ENCODE measurements at regions of chr5 and their contacts with region 1.

Region 1: DNA sequence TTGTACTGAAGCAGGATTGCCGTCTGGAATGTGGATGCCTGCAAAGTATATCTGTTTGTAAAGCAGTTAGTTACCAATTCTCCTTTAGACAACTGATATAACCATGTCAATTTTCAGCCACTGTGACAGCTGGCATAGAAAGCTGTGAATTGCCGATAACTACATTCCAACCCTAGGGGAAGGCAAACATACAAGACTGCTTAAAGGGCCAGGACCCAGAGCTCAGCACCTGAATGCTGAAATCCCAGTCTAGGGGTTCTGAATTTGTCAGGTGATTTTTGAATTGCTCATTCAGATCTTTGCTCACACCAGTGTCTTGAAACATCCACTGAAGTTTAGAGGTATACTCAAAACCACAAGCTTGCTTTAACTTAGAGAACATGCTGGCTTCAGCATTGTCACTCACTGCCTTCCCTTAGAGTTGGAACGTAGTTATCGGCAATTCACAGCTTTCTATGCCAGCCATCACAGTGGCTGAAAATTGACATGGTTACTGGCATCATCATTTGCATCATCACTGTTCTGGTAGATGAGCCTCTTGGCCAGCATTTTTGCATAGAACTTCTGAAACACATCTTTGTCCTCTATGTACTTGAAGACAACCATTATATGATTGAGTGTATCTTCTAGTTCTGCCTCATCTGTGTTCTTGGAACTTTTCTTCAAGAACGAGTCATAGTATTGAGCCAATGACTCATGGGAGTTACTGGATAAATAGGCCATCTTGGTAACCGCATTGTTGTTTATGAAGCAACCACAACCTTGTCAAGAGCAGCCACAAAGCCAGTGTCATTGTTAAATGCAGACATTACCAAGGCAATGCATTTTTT is 82.1 kb downstream of the CCDC192 start:
- DNase-seq: peak; percentile 51
- ATAC-seq: peak; percentile 92
- H3K4me3 Mint-ChIP-seq: no peak overlapping the region
- H3K27ac Mint-ChIP-seq: peak overlapping the region; percentile 88
- H3K4me1 Mint-ChIP-seq: peaks cover 26% of the 10 kb centered on the region
- H3K27me3 Mint-ChIP-seq: peaks cover 13% of the 10 kb centered on the region

Region 2: DNA sequence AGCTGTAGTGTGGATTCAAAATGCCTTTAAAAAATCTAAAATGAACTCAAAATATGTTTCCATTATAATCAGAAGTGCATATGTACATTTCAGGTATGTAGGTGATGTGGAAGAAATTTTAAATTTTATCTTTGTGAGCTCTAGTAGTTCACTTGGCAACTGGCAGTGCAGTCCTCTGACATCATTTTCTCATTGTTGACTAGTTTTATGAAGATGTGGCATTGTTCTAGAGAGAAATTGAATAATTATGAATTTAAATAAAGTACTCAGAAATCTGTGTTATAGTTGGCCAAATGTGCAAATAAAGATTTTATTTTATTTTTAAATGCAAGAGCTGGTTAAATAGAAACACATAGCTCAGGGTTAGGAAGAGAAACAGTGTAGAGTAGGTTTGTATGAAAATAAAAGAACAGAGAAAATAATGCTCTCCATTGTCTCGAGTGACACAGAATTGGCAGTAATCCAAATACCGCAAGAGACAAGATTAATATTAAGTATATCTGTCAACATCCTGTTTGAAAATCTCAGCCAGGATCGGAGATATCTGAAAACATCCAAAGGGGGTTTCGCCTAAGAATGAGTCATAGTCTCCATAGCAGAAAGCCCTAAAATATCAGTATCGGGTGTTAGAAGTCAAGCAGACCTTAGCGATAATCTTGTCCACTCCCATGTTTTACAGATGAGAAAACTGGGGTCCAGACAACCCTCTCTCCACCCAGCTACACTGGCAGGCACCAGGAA is 107.3 kb after region 1 on chr5:
- CTCF ChIA-PET with region 1: no interaction called
- POLR2A ChIA-PET with region 1: no interaction called
- intact Hi-C with region 1: loop called in 1 of 2 experiments (anchors 10 kb)
- DNase-seq: no peak
- ATAC-seq: peak; percentile 23
- H3K4me3 Mint-ChIP-seq: no peak overlapping the region
- H3K27ac Mint-ChIP-seq: no peak overlapping the region
- H3K4me1 Mint-ChIP-seq: no peaks in the 10 kb centered on the region
- H3K27me3 Mint-ChIP-seq: no peaks in the 10 kb centered on the region

Region 3: DNA sequence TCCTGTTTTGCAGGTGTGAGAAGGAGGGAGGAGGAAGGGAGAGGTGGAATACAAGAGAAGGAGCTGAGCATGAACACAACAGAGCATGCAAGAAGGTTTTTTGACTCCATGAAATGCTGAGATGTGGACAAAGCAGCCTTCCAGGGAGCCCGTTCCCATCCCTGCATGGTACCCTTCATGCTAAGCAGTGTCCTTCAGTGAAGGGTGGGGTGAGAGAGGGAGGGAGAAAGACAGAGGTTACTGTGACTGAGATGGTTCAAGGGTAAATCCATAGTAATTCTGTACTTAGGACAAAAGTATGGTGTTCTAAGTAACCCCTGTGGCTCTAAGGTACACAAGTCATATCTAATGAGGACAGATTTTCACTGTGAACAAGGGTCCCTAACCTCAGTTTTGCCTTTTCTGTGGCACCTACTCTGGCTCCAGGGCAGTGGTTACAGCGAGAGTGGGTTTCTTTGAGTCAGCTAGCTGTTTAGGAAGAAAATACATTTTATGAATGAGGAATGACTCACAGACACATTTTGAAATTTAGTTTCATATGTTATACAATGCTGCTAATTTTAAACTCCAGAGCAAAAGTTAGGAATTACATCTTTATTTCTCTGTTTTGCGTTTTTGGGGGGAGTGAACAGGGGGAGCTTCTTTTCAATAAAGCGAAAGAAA is 113.4 kb after region 1 on chr5:
- CTCF ChIA-PET with region 1: interaction called, 3 read pairs
- POLR2A ChIA-PET with region 1: no interaction called
- intact Hi-C with region 1: loop called (anchors 2 to 10 kb)
- DNase-seq: peak; percentile 51
- ATAC-seq: peak; percentile 90
- H3K4me3 Mint-ChIP-seq: no peak overlapping the region
- H3K27ac Mint-ChIP-seq: no peak overlapping the region
- H3K4me1 Mint-ChIP-seq: peaks cover 10% of the 10 kb centered on the region
- H3K27me3 Mint-ChIP-seq: no peaks in the 10 kb centered on the region